ENCODE measurements at regions of chr2 and their contacts with region 1.

Region 1: GRCh38 chr2:96760036-96760985 is at the start of gene CNNM4:
- DNase-seq: peak; percentile 86 to 93
- ATAC-seq: peak; percentile 93 to 95
- H3K4me3 ChIP-seq: peak within 1 kb of the TSS; percentile 55
- H3K27ac ChIP-seq: peak within 1 kb of the TSS; percentile 80 to 93
- H3K4me1 ChIP-seq: peaks cover 38% of the 10 kb centered on the region
- CTCF ChIP-seq: no peak
- EP300 ChIP-seq: no peak
- POLR2A ChIP-seq: peak; percentile 92
- RAD21 ChIP-seq: no peak; a peak in 1 of 5 replicates
- polyA plus RNA-seq, gene CNNM4: 11.2 and 15.0 TPM in 2 replicates

Region 2: GRCh38 chr2:96739076-96739632 is 21.2 kb before region 1 on chr2:
- CTCF ChIA-PET with region 1: interaction called, 10 read pairs
- POLR2A ChIA-PET with region 1: no interaction called
- DNase-seq: no peak
- ATAC-seq: no peak
- H3K4me3 ChIP-seq: peak overlapping the region; percentile 78
- H3K27ac ChIP-seq: peak overlapping the region; percentile 80 to 94
- H3K4me1 ChIP-seq: peaks cover 13% of the 10 kb centered on the region; the same call in 2 of the 3 replicates
- CTCF ChIP-seq: no peak
- EP300 ChIP-seq: no peak
- POLR2A ChIP-seq: no peak
- RAD21 ChIP-seq: no peak

Region 3: DNA sequence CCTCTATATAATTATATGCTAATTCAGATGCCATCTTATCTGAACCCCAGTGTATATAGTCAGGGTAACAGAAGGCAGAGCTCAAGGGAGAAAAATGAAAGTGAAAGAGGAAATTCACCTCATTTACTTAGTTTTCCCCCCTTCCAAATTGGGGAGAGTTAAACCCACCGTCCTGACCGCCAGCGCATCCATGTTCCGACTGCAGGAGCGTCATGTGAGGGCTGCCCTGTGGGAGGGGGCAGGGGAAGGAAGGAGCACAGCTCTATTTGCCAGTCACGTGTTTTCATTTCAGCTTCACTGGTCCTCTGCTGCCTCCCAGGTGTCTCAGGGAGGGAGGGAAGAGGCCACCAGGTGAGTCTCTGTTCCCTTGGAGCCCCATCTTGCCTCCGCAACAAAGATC is 13.6 kb after region 1 on chr2:
- CTCF ChIA-PET with region 1: interaction called, 46 read pairs
- POLR2A ChIA-PET with region 1: no interaction called
- DNase-seq: no peak
- ATAC-seq: no peak
- H3K4me3 ChIP-seq: no peak overlapping the region
- H3K27ac ChIP-seq: no peak overlapping the region
- H3K4me1 ChIP-seq: peaks cover 3% of the 10 kb centered on the region; the same call in 1 of the 3 replicates
- CTCF ChIP-seq: no peak
- EP300 ChIP-seq: no peak
- POLR2A ChIP-seq: no peak
- RAD21 ChIP-seq: no peak

Region 4: GRCh38 chr2:96788442-96789244 is 28.3 kb after region 1 on chr2:
- CTCF ChIA-PET with region 1: interaction called, 13 read pairs
- POLR2A ChIA-PET with region 1: no interaction called
- DNase-seq: peak in 1 of 2 experiments; percentile 42
- ATAC-seq: peak; percentile 70 to 76; a peak in 5 of 6 replicates
- H3K4me3 ChIP-seq: no peak overlapping the region
- H3K27ac ChIP-seq: peak overlapping the region; percentile 36 to 85; a peak in 5 of 6 replicates
- H3K4me1 ChIP-seq: peaks cover 30% of the 10 kb centered on the region
- CTCF ChIP-seq: no peak
- EP300 ChIP-seq: no peak
- POLR2A ChIP-seq: no peak
- RAD21 ChIP-seq: no peak